Naive thymus-derived CD4-positive, alpha-beta T cell (primary cell): ENCODE measurements at regions of chr7 and their contacts with region 1.

Region 1: DNA sequence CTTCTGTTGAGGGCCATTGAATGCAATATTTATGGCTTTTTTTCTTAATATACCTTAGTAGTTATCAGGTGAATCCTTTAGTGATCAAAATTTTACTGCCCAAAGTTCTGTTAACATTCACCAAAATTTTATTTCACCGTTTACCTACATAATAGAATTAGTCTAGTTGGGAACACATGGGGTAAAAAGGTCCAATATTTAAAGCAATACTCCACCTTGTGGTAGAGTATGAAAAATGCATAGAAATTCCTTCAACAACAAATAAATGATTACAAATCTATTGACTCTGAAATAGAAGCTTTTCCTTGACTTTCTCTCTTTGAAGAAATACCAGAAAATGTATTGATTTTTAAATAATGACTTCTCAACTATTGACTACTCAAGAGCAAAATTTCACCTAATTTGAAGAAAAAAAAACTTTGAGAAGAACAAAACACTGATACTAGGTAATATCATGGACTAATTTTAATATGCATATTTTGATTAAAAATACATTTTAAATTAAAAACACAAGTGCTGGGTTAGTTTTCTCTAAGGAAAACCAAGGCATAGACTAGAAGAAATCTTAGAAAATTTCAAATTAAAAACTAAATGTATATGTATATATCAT is 43.3 kb downstream of the POLR1F start:
- DNase-seq: peak in 4 of 9 donors; percentile 5 to 8 (median 6)
- ATAC-seq: no peak
- H3K4me3 ChIP-seq: no peak overlapping the region
- H3K4me3 Mint-ChIP-seq: peak overlapping the region in 3 of 10 donors; percentile 6 to 41 (median 28)
- H3K27ac ChIP-seq: no peak overlapping the region
- H3K27ac Mint-ChIP-seq: no peak overlapping the region
- H3K4me1 ChIP-seq: no peaks in the 10 kb centered on the region
- H3K4me1 Mint-ChIP-seq: peaks cover 0 to 21% (median 12%) of the 10 kb centered on the region in 7 donors
- H3K27me3 ChIP-seq: no peaks in the 10 kb centered on the region
- H3K27me3 Mint-ChIP-seq: peaks cover 0 to 14% (median 8%) of the 10 kb centered on the region in 5 donors

Region 2: GRCh38 chr7:17680943-17681351 is 1984.6 kb before region 1 on chr7:
- CTCF ChIA-PET with region 1: interaction called, 3 read pairs
- POLR2A ChIA-PET with region 1: no interaction called
- intact Hi-C with region 1: loop called in 1 of 2 experiments (anchors 1 kb)
- DNase-seq: peak in 4 of 9 donors; percentile 12 to 35 (median 18)
- ATAC-seq: no peak
- H3K4me3 ChIP-seq: no peak overlapping the region
- H3K4me3 Mint-ChIP-seq: no peak overlapping the region
- H3K27ac ChIP-seq: no peak overlapping the region
- H3K27ac Mint-ChIP-seq: no peak overlapping the region
- H3K4me1 ChIP-seq: no peaks in the 10 kb centered on the region
- H3K4me1 Mint-ChIP-seq: no peaks in the 10 kb centered on the region
- H3K27me3 ChIP-seq: no peaks in the 10 kb centered on the region
- H3K27me3 Mint-ChIP-seq: peaks cover 0 to 2% (median 0%) of the 10 kb centered on the region in 5 donors

Region 3: DNA sequence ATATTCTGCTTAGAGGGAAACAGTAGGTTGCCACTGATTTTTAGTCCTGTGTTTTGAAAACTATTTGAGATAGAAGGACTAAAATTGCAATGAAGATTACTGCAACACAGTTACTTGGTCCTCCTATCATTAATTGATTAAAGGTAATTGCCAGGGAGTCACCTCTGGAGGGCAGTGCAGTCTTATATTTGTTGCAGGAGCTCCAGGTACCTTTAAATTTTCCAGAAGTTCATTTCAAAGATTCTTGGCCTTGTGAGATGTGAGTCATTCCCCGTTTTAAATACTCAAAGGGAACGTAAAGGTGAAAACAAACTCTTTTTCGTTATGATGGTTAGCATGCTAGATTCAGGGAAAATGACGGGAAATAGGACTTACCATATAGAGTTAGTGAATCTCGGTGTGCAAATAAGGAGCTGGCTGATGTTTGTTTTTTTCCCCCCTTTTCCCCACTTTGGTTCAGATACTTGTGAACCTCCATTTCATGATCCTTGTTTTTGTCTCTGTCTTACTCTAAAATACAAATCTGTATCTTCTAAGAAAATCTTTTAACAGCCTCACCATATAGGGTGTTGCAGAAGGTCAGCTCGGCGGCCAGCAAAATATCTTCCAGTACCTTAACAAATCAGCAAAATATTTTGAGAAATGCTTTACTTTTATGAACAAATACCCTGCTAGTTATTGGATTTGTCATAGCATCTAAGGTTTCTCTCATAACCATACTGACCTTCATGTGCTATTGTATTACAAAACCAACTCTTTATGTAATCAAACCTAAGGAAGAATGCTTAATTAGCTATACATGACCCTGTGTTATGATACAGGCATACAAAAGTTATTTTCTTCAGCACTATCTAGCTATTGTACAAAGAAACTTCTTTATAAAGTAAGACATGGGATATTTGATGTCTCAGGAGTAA is 1312.9 kb before region 1 on chr7:
- CTCF ChIA-PET with region 1: no interaction called
- POLR2A ChIA-PET with region 1: no interaction called
- intact Hi-C with region 1: loop called (anchors 1 to 2 kb)
- DNase-seq: no peak
- ATAC-seq: no peak
- H3K4me3 ChIP-seq: no peak overlapping the region
- H3K4me3 Mint-ChIP-seq: no peak overlapping the region
- H3K27ac ChIP-seq: no peak overlapping the region
- H3K27ac Mint-ChIP-seq: no peak overlapping the region
- H3K4me1 ChIP-seq: no peaks in the 10 kb centered on the region
- H3K4me1 Mint-ChIP-seq: peaks cover 0 to 12% (median 6%) of the 10 kb centered on the region in 7 donors
- H3K27me3 ChIP-seq: no peaks in the 10 kb centered on the region
- H3K27me3 Mint-ChIP-seq: peaks cover 0 to 13% (median 4%) of the 10 kb centered on the region in 5 donors

Region 4: GRCh38 chr7:18590744-18591340 is 1074.7 kb before region 1 on chr7:
- CTCF ChIA-PET with region 1: no interaction called
- POLR2A ChIA-PET with region 1: no interaction called
- intact Hi-C with region 1: loop called in 1 of 2 experiments (anchors 5 kb)
- DNase-seq: no peak
- ATAC-seq: no peak
- H3K4me3 ChIP-seq: no peak overlapping the region
- H3K4me3 Mint-ChIP-seq: no peak overlapping the region
- H3K27ac ChIP-seq: no peak overlapping the region
- H3K27ac Mint-ChIP-seq: no peak overlapping the region
- H3K4me1 ChIP-seq: no peaks in the 10 kb centered on the region
- H3K4me1 Mint-ChIP-seq: peaks cover 0 to 5% (median 0%) of the 10 kb centered on the region in 7 donors
- H3K27me3 ChIP-seq: no peaks in the 10 kb centered on the region
- H3K27me3 Mint-ChIP-seq: no peaks in the 10 kb centered on the region

Region 5: DNA sequence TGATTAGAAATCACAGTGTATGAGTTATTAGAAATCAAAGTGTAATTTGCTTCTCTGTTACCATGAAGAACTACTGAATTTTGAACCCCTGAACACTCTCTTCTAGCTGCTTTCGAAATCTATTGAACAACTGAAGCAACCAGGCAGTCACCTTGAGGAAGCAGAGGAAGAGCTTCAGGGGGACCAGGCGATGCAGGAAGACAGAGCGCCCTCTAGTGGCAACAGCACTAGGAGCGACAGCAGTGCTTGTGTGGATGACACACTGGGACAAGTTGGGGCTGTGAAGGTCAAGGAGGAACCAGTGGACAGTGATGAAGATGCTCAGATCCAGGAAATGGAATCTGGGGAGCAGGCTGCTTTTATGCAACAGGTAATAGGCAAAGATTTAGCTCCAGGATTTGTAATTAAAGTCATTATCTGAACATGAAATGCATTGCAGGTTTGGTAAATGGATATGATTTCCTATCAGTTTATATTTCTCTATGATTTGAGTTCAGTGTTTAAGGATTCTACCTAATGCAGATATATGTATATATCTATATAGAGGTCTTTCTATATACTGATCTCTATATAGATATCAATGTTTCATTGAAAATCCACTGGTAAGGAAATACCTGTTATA is 999.3 kb before region 1 on chr7:
- CTCF ChIA-PET with region 1: no interaction called
- POLR2A ChIA-PET with region 1: no interaction called
- intact Hi-C with region 1: loop called in 1 of 2 experiments (anchors 10 kb)
- DNase-seq: peak in 8 of 9 donors; percentile 1 to 63 (median 15)
- ATAC-seq: peak; percentile 81
- H3K4me3 ChIP-seq: no peak overlapping the region
- H3K4me3 Mint-ChIP-seq: no peak overlapping the region
- H3K27ac ChIP-seq: no peak overlapping the region
- H3K27ac Mint-ChIP-seq: peak overlapping the region in 1 of 9 donors; percentile 6
- H3K4me1 ChIP-seq: no peaks in the 10 kb centered on the region
- H3K4me1 Mint-ChIP-seq: peaks cover 0 to 5% (median 0%) of the 10 kb centered on the region in 7 donors
- H3K27me3 ChIP-seq: no peaks in the 10 kb centered on the region
- H3K27me3 Mint-ChIP-seq: no peaks in the 10 kb centered on the region

Region 6: DNA sequence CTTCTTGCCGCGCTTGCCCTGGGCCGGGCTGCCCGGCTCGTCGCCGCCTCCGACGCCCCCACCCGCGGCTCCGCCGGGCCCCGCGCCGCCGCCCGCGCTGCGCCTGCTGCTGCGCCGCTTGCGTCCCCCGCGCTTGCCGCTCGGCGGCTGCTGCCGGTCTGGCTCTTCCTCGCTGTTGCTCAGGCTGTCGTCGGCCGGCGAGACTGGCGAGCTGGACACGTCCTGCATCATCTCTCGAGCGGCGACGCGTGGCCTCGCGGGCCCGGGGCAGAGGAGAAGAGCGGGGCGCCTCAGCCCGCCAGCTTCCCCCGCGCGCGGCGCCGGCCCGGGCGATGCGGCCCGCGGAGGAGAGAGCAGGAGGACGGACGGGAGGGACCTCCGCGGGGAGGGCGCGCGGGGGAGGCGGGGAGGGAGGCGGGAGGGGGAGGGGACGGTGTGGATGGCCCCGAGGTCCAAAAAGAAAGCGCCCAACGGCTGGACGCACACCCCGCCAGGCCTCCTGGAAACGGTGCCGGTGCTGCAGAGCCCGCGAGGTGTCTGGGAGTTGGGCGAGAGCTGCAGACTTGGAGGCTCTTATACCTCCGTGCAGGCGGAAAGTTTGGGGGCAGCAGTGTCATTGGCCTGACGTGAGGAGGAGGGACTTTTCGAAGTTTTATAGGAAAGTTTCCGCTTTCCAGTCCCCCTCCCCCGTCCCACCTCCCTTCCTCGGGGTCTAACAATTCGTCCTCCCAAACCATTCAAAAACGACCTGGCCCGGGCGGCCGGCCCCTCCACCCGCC is 548.2 kb before region 1 on chr7 and contains the start of gene TWIST1:
- CTCF ChIA-PET with region 1: no interaction called
- POLR2A ChIA-PET with region 1: no interaction called
- intact Hi-C with region 1: loop called in 1 of 2 experiments (anchors 10 kb)
- DNase-seq: peak in 1 of 9 donors; percentile 31
- ATAC-seq: no peak
- H3K4me3 ChIP-seq: no peak within 1 kb of the TSS
- H3K4me3 Mint-ChIP-seq: peak within 1 kb of the TSS in 2 of 10 donors; percentile 52 to 69
- H3K27ac ChIP-seq: no peak within 1 kb of the TSS
- H3K27ac Mint-ChIP-seq: no peak within 1 kb of the TSS
- H3K4me1 ChIP-seq: no peaks in the 10 kb centered on the region
- H3K4me1 Mint-ChIP-seq: peaks cover 0 to 4% (median 3%) of the 10 kb centered on the region in 7 donors
- H3K27me3 ChIP-seq: peaks cover 5 to 26% of the 10 kb centered on the region in 2 donors
- H3K27me3 Mint-ChIP-seq: peaks cover 57 to 73% (median 71%) of the 10 kb centered on the region in 5 donors
- total RNA-seq, gene TWIST1: 3.4 TPM in 1 of 5 experiments, not detected in the others

Region 7: DNA sequence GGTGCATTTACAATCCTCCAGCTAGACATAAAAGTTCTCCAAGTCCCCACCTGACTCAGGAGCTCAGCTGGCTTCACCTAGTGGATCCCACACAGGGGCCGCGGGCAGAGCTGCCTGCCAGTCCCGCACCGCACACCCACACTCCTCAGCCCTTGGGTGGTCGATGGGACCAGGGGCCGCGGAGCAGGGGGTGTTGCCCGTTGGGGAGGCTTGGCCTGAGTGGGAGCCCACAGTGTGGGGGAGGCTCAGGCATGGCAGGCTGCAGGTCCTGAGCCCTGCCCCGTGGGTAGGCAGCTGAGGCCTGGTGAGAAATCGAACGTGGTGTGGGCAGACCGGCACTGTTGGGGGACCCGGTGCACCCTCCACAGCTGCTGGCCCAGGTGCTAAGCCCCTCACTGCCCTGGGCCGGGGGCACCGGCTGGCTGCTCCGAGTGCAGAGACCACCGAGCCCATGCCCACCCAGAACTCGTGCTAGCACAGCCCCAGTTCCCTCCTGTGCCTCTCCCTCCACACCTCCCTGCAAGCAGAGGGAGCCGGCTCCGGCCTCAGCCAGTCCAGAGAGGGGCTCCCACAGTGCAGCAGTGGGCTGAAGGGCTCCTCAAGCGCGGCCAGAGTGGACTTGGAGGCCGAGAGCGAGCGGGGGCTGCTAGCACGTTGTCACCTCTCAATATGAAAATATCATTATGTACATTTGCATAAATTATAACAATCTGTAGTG is 26.8 kb after region 1 on chr7:
- CTCF ChIA-PET with region 1: no interaction called
- POLR2A ChIA-PET with region 1: no interaction called
- intact Hi-C with region 1: no loop called
- DNase-seq: no peak
- ATAC-seq: no peak
- H3K4me3 ChIP-seq: no peak overlapping the region
- H3K4me3 Mint-ChIP-seq: no peak overlapping the region
- H3K27ac ChIP-seq: no peak overlapping the region
- H3K27ac Mint-ChIP-seq: no peak overlapping the region
- H3K4me1 ChIP-seq: no peaks in the 10 kb centered on the region
- H3K4me1 Mint-ChIP-seq: no peaks in the 10 kb centered on the region
- H3K27me3 ChIP-seq: no peaks in the 10 kb centered on the region
- H3K27me3 Mint-ChIP-seq: peaks cover 0 to 8% (median 0%) of the 10 kb centered on the region in 5 donors